ENCODE measurements at regions of chr20 and their contacts with region 1.

Region 1: GRCh38 chr20:50575847-50576720 is 65.9 kb downstream of the PTPN1 start:
- DNase-seq: peak; percentile 80
- ATAC-seq: peak; percentile 86
- H3K4me3 Mint-ChIP-seq: no peak overlapping the region
- H3K27ac Mint-ChIP-seq: peak overlapping the region; percentile 68
- H3K4me1 Mint-ChIP-seq: peaks cover 20% of the 10 kb centered on the region
- H3K27me3 Mint-ChIP-seq: no peaks in the 10 kb centered on the region
- CTCF ChIP-seq: peak; percentile 75

Region 2: DNA sequence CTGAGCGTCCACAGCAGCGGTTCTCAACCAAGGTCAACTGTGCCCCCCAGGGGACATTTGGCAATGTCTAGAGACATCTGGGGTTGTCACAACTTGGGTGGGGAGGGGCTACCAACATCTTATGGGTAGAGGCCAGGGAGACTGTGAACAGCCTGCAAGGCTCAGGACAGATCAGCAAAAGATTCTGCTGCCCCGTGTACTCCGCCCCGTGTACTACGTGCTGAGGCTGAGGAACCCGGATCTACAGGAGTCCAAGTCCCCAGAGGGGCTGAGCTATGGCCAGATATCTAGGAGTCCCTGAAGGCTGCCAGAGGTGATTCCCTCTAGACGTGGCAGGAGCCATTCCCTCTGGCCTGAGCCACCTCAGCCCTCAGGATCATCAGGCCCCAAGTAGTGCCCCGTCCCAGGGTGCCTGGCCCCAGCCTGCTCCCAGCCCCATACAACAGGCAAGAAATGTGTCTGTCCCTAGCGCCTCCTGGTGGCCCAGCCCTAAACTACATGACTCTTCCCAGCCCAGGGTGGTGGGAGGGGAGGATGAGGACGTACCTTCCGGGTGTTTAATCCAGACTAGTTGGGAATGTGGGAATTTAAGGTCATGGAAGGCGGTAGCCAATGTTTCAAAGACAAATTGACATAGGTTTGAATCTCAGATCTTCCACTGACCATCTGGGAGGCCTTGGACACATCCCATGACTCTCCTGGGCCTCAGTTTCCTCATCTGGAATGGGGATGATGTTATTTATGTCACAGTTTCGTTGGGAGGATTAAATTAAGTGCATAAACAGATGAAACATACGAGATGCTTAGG is 115.4 kb before region 1 on chr20:
- CTCF ChIA-PET with region 1: interaction called, 25 read pairs
- POLR2A ChIA-PET with region 1: no interaction called
- intact Hi-C with region 1: no loop called
- DNase-seq: peak; percentile 89
- ATAC-seq: peak; percentile 92
- H3K4me3 Mint-ChIP-seq: no peak overlapping the region
- H3K27ac Mint-ChIP-seq: no peak overlapping the region
- H3K4me1 Mint-ChIP-seq: peaks cover 3% of the 10 kb centered on the region
- H3K27me3 Mint-ChIP-seq: peaks cover 5% of the 10 kb centered on the region
- CTCF ChIP-seq: peak; percentile 86

Region 3: GRCh38 chr20:50504231-50504823 is 71.8 kb before region 1 on chr20:
- CTCF ChIA-PET with region 1: interaction called, 64 read pairs
- POLR2A ChIA-PET with region 1: interaction called, 10 read pairs
- intact Hi-C with region 1: no loop called
- DNase-seq: no peak
- ATAC-seq: peak; percentile 68
- H3K4me3 Mint-ChIP-seq: no peak overlapping the region
- H3K27ac Mint-ChIP-seq: no peak overlapping the region
- H3K4me1 Mint-ChIP-seq: peaks cover 7% of the 10 kb centered on the region
- H3K27me3 Mint-ChIP-seq: no peaks in the 10 kb centered on the region
- CTCF ChIP-seq: peak; percentile 29

Region 4: DNA sequence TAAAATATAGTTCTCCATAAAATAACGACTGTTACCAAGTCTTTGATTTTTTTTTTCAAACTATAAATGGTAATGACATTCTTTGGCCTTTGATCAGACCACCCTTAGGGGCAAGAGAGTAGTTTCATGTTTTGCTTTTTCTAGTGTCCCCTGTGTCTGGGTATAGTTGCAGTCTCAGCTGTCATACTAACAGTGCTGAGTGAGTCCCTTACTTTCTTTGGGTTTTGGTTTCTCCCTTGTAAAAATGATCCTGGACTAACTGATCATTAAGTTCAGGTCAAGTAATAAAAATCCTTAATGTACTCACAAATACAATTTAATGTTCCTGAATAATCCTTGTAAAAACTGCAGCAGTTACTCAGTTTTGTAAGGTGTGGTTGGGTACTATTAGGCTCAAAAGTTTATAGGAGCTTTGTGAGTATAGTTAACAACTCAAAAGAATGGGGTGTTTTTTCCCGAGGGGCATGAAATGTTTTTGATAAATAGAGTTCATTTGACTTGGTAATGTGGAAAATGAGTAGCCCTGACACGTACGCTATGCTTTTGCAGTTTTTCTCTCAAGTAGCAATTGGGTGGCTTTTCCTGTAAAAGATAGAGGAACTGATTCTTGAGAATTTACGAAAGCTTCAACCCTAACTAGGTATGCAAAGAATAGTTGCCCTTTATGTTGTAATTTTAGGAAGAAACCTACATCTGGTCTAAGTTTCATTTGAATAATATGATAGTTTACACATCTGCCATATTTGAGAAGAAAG is 59.7 kb before region 1 on chr20:
- CTCF ChIA-PET with region 1: interaction called, 64 read pairs
- POLR2A ChIA-PET with region 1: interaction called, 10 read pairs
- intact Hi-C with region 1: no loop called
- DNase-seq: peak; percentile 26
- ATAC-seq: peak; percentile 45
- H3K4me3 Mint-ChIP-seq: peak overlapping the region; percentile 78
- H3K27ac Mint-ChIP-seq: peak overlapping the region; percentile 98
- H3K4me1 Mint-ChIP-seq: peaks cover 87% of the 10 kb centered on the region
- H3K27me3 Mint-ChIP-seq: no peaks in the 10 kb centered on the region
- CTCF ChIP-seq: no peak

Region 5: GRCh38 chr20:50710492-50711063 is 134.5 kb after region 1 on chr20:
- CTCF ChIA-PET with region 1: no interaction called
- POLR2A ChIA-PET with region 1: no interaction called
- intact Hi-C with region 1: no loop called
- DNase-seq: no peak
- ATAC-seq: no peak
- H3K4me3 Mint-ChIP-seq: no peak overlapping the region
- H3K27ac Mint-ChIP-seq: no peak overlapping the region
- H3K4me1 Mint-ChIP-seq: no peaks in the 10 kb centered on the region
- H3K27me3 Mint-ChIP-seq: peaks cover 11% of the 10 kb centered on the region
- CTCF ChIP-seq: no peak

Region 6: GRCh38 chr20:50776122-50776817 is 200.2 kb after region 1 on chr20:
- CTCF ChIA-PET with region 1: no interaction called
- POLR2A ChIA-PET with region 1: no interaction called
- intact Hi-C with region 1: no loop called
- DNase-seq: no peak
- ATAC-seq: no peak
- H3K4me3 Mint-ChIP-seq: no peak overlapping the region
- H3K27ac Mint-ChIP-seq: no peak overlapping the region
- H3K4me1 Mint-ChIP-seq: peaks cover 6% of the 10 kb centered on the region
- H3K27me3 Mint-ChIP-seq: no peaks in the 10 kb centered on the region
- CTCF ChIP-seq: no peak